K562 (cell line): ENCODE measurements at regions of chr11 and their contacts with region 1.

Region 1: GRCh38 chr11:88543902-88544655 is 206.5 kb upstream of the CTSC start:
- DNase-seq: peak; percentile 67 to 85 (median 72)
- ATAC-seq: peak; percentile 100
- H3K4me3 ChIP-seq: no peak overlapping the region
- H3K27ac ChIP-seq: no peak overlapping the region
- H3K4me1 ChIP-seq: no peaks in the 10 kb centered on the region; a peak in 1 of 5 replicates
- H3K27me3 ChIP-seq: no peaks in the 10 kb centered on the region
- CTCF ChIP-seq: peak; percentile 95 to 98 (median 97)
- EP300 ChIP-seq: no peak
- POLR2A ChIP-seq: no peak
- RAD21 ChIP-seq: peak; percentile 98 to 99

Region 2: DNA sequence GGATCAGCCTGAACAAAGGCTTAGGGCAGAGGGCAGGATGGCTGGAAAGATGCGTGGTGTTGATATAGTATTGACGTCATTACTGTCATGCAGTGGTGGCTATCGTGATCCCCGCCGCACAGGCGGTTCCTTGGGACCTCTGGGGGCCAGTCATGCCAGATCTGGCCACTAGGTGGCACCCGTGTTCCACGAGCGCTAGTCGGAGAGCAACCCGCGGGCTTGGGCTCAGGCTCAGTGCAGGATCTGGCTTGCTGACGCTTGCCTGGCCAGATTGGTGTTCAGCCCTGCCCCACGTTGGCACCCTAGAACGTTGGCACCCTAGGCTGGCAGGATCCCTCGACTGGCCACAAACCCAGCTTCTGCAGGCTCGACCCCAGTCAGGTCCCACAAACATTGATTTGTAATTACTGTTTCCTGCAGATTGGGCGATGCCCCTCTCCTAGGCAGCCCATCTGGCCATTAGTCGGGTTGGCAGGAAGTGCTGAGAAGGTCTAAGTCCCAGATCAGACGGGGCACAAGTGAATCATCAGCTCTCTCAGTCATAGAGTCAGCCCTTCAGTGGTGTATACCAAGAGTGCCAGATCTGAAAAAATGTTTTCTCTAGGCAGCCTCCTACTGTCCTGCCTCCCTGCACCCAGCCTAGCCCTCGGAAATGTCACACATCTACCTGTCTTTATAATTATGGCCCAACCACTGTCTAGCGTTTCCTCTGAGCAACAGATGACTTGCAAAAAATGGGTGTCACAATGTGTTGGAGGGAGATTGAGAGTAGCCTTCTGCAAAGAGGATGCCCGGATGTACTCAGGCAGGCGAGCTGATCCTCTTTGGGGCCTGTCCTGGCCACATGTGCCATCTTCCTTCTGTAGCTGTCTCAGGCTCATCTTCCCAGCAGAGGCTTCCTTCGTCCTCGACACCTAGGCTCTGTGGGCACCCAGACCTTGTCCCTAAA is 1191.0 kb before region 1 on chr11:
- CTCF ChIA-PET with region 1: no interaction called
- POLR2A ChIA-PET with region 1: no interaction called
- in situ Hi-C with region 1: loop called (anchors 10 kb)
- intact Hi-C with region 1: loop called (anchors 2 kb)
- DNase-seq: peak; percentile 82 to 90 (median 86)
- ATAC-seq: peak; percentile 98
- H3K4me3 ChIP-seq: no peak overlapping the region
- H3K27ac ChIP-seq: no peak overlapping the region
- H3K4me1 ChIP-seq: peaks cover 3 to 4% of the 10 kb centered on the region in 2 experiments; a peak in 4 of 5 replicates
- H3K27me3 ChIP-seq: peaks cover 2 to 8% of the 10 kb centered on the region in 2 experiments; a peak in 1 of 5 replicates
- CTCF ChIP-seq: peak; percentile 92 to 97 (median 94)
- EP300 ChIP-seq: no peak
- POLR2A ChIP-seq: no peak
- RAD21 ChIP-seq: peak; percentile 86 to 95

Region 3: GRCh38 chr11:87463486-87464102 is 1080.5 kb before region 1 on chr11:
- CTCF ChIA-PET with region 1: no interaction called
- POLR2A ChIA-PET with region 1: no interaction called
- in situ Hi-C with region 1: no loop called
- intact Hi-C with region 1: loop called (anchors 2 kb)
- DNase-seq: peak; percentile 17 to 39 (median 33)
- ATAC-seq: peak; percentile 84
- H3K4me3 ChIP-seq: no peak overlapping the region
- H3K27ac ChIP-seq: no peak overlapping the region
- H3K4me1 ChIP-seq: no peaks in the 10 kb centered on the region
- H3K27me3 ChIP-seq: no peaks in the 10 kb centered on the region
- CTCF ChIP-seq: peak; percentile 14 to 56 (median 51); a peak in 3 of 6 replicates
- EP300 ChIP-seq: no peak
- POLR2A ChIP-seq: no peak
- RAD21 ChIP-seq: peak; percentile 33 to 67; a peak in 3 of 4 replicates

Region 4: DNA sequence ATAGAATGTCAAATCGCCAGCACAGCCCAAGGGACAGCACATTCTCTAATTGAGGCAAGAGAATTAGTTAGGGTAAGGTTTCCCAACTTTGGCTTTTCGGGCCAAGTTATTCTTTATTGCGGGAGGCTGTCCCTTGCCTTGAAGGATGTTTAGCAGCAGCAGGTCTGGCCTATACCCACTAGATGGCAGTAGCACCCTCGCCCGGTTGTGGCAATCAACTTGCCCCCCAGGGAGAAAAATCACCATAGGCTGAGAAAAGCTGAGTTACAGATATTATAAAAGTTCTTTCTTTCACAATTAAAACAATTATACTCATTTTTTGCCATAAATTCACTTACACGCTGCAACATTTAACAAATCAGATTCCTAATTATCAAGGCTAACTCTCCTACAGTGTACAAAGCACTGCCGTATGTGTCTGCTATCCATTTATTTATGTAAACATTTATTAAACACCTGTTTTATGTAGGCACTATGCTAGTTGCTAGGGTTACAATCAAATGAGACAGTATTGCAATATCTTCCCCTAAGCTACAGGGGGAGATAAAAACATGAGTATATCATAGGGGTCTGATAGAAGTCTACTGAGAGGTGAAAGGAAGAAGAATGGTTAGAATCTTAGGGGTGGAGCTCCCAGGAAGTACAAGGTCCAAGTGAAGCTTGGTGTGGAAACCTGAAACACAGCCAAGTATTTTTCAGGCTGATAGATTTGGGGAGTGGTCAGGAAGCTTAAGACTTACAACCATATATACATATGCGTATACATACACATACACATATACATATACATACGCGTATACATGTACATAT is 821.1 kb before region 1 on chr11:
- CTCF ChIA-PET with region 1: no interaction called
- POLR2A ChIA-PET with region 1: no interaction called
- in situ Hi-C with region 1: no loop called
- intact Hi-C with region 1: loop called (anchors 2 kb)
- DNase-seq: peak in 3 of 4 experiments; percentile 13 to 17 (median 16)
- ATAC-seq: no peak
- H3K4me3 ChIP-seq: no peak overlapping the region
- H3K27ac ChIP-seq: no peak overlapping the region
- H3K4me1 ChIP-seq: no peaks in the 10 kb centered on the region
- H3K27me3 ChIP-seq: no peaks in the 10 kb centered on the region
- CTCF ChIP-seq: peak; percentile 28 to 53 (median 39); a peak in 4 of 6 replicates
- EP300 ChIP-seq: no peak
- POLR2A ChIP-seq: no peak
- RAD21 ChIP-seq: peak in 1 of 2 experiments; percentile 29; a peak in 2 of 4 replicates

Region 5: DNA sequence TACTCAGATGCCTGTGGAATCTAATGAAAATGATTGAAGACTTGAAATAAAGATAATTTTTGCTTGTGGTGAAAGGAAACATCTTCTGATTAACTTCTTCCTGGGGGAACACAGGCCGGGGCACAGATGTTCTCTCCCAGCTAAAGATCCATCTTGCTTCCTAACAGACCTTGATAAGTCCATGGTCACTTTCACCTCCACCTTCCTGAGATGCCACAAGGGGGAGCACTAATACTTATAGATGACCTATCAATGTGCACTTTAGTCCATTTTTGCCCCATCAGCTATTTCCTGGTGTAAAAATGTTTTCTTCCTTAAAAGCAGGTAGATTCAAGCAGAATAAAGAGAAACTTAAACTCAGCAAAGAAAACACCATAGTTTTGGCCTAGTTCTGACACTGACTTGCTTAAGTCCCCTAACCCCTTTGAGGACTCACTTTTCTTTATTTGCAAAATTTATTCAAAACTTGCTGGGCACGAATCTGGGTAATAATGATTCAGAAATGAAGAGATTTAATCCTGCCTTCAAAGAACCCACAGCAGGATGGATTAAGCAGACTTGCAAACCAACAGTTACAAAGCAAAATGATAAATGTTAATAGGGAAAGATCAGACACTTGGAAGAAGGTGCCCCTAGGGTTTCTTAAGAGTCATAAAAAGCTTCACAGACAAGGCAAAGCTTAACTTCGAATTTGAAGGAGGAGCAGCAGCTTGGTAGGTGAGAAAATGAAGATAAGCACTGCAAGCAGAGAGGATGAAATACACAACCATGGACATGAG is 527.5 kb before region 1 on chr11:
- CTCF ChIA-PET with region 1: interaction called, 22 read pairs
- POLR2A ChIA-PET with region 1: no interaction called
- in situ Hi-C with region 1: no loop called
- intact Hi-C with region 1: loop called (anchors 1 kb)
- DNase-seq: peak; percentile 12 to 73 (median 22)
- ATAC-seq: peak; percentile 91
- H3K4me3 ChIP-seq: no peak overlapping the region
- H3K27ac ChIP-seq: no peak overlapping the region
- H3K4me1 ChIP-seq: no peaks in the 10 kb centered on the region
- H3K27me3 ChIP-seq: no peaks in the 10 kb centered on the region
- CTCF ChIP-seq: peak; percentile 49 to 76 (median 68)
- EP300 ChIP-seq: no peak
- POLR2A ChIP-seq: no peak
- RAD21 ChIP-seq: peak; percentile 87 to 88

Region 6: DNA sequence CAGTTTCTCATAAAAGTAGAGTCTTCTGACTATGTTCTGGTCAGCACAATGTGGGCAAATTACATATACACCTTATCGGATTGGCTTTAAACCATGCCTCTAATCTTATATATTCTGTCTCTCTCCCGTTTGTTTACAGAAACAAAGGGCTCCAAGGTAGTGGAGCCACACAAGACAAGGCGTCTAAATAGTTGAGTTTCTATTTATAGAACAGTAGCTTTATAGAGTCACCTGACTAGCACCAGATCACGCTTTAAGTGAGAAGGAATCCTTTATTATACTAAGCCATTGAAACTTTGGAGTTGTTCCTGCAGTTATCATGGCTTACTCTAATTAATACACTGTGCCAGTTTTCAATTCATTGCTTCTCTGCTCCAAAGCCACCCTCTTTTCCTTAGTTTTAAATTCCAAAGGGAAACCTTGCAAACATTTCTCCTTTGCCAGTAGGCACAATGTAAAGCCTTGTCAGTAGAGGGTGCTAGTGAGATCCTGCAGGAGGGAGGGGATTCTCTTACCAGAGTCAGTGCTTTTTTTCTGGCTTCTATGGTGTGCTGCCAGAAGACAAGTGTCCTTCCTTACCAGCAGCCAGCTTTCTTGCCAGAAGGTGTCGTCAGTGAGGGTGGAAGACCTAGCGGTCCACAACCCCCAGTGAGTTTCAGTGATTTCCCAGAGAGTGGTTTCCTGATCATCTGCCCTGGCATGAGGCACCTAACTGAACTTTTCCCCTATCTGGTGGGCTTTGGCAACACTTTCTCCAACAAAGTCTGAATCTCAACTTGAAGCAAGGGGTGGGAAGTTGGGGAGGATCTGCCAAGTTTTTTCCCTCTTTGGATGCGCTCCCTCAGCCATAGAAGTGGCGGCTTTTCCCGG is 440.5 kb before region 1 on chr11:
- CTCF ChIA-PET with region 1: interaction called, 14 read pairs
- POLR2A ChIA-PET with region 1: no interaction called
- in situ Hi-C with region 1: no loop called
- intact Hi-C with region 1: loop called (anchors 1 kb)
- DNase-seq: peak; percentile 33 to 73 (median 48)
- ATAC-seq: peak; percentile 99
- H3K4me3 ChIP-seq: no peak overlapping the region
- H3K27ac ChIP-seq: no peak overlapping the region
- H3K4me1 ChIP-seq: no peaks in the 10 kb centered on the region
- H3K27me3 ChIP-seq: no peaks in the 10 kb centered on the region
- CTCF ChIP-seq: peak; percentile 84 to 85 (median 84)
- EP300 ChIP-seq: no peak
- POLR2A ChIP-seq: no peak
- RAD21 ChIP-seq: peak; percentile 77 to 82

Region 7: GRCh38 chr11:88164806-88165585 is 379.1 kb before region 1 on chr11:
- CTCF ChIA-PET with region 1: interaction called, 3 read pairs
- POLR2A ChIA-PET with region 1: no interaction called
- in situ Hi-C with region 1: no loop called
- intact Hi-C with region 1: loop called (anchors 1 kb)
- DNase-seq: no peak
- ATAC-seq: no peak
- H3K4me3 ChIP-seq: no peak overlapping the region
- H3K27ac ChIP-seq: no peak overlapping the region
- H3K4me1 ChIP-seq: no peaks in the 10 kb centered on the region
- H3K27me3 ChIP-seq: no peaks in the 10 kb centered on the region
- CTCF ChIP-seq: no peak; a peak in 1 of 6 replicates
- EP300 ChIP-seq: no peak
- POLR2A ChIP-seq: no peak
- RAD21 ChIP-seq: 0 out of 4 replicates have a peak, but pooled peaks have one; percentile 14 to 18

Region 8: GRCh38 chr11:88779577-88779976 is 235.5 kb after region 1 on chr11:
- CTCF ChIA-PET with region 1: no interaction called
- POLR2A ChIA-PET with region 1: no interaction called
- in situ Hi-C with region 1: no loop called
- intact Hi-C with region 1: no loop called
- DNase-seq: no peak
- ATAC-seq: no peak
- H3K4me3 ChIP-seq: no peak overlapping the region
- H3K27ac ChIP-seq: no peak overlapping the region
- H3K4me1 ChIP-seq: no peaks in the 10 kb centered on the region
- H3K27me3 ChIP-seq: no peaks in the 10 kb centered on the region
- CTCF ChIP-seq: no peak
- EP300 ChIP-seq: no peak
- POLR2A ChIP-seq: no peak
- RAD21 ChIP-seq: no peak